Activated CD8-positive, alpha-beta T cell treated with anti-CD3 and anti-CD28 coated beads, Interleukin-2, amount 10 ng/mL, durations not matched to agents 7 days and 5 days (primary cell): ENCODE measurements at regions of chr20 and their contacts with region 1.

Region 1: DNA sequence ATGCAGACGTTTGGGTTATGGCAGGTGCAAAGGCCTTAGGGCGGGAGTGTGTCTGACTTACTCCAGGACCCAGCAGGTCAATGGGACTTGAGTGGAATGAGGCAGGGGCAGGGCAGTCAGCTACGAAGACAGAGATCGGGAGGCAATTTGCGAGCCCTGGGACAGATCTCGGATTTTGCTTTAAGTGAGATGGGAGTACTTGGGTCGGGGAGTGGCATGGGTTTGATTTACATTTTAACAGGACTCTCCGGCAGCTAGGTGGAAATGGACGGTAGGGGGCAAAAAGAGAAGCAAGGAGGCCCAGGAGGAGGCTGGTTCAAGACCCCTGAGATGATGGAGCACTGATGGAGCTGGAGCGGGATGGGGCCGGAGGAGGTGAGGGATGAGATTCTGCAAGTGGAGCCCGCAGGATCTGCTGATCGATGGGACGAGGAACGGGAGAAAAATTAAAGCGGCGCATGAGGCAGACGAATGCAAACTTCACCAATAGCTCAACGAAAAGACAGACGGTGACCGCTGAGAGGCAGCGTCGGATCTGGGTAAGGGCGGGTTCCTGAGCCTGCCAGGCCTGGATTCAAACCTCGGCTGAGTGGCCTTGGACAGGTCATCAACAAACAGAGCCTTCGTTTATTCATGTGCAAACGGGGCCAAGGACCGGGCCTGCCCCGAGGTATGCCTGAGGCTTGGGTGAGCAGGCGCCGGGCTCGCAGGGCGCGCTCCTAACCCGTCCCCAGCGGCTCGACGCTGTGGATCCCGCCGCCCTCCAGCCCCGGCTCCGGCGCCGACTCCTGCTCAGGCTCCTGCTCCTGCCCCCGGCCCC is 756 bp upstream of the RBCK1 start:
- DNase-seq: peak; percentile 77
- ATAC-seq: peak; percentile 86
- H3K4me3 Mint-ChIP-seq: peak overlapping the region; percentile 85
- H3K27ac Mint-ChIP-seq: peak overlapping the region; percentile 98
- H3K4me1 Mint-ChIP-seq: peaks cover 56% of the 10 kb centered on the region
- H3K27me3 Mint-ChIP-seq: no peaks in the 10 kb centered on the region

Region 2: DNA sequence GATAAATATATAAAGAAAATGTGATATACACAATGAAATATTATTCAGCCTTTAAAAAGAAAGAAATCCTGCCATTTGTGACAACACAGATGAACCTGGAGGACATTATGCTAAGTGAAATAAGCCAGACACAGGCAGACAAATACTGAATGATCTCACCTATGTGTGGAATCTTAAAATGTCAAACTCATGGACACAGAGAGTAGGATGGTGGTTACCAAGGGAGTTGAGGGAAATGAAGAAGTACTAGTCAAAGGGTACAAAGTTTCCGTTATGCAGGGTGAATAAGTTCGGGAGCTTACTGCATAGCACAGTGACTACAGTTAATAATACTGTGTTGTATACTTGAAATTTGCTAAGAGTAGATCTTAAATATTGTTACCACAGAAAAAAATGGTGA is 164.4 kb before region 1 on chr20:
- CTCF ChIA-PET with region 1: no interaction called
- POLR2A ChIA-PET with region 1: no interaction called
- DNase-seq: no peak
- ATAC-seq: no peak
- H3K4me3 Mint-ChIP-seq: no peak overlapping the region
- H3K27ac Mint-ChIP-seq: no peak overlapping the region
- H3K4me1 Mint-ChIP-seq: peaks cover 7% of the 10 kb centered on the region
- H3K27me3 Mint-ChIP-seq: peaks cover 15% of the 10 kb centered on the region

Region 3: DNA sequence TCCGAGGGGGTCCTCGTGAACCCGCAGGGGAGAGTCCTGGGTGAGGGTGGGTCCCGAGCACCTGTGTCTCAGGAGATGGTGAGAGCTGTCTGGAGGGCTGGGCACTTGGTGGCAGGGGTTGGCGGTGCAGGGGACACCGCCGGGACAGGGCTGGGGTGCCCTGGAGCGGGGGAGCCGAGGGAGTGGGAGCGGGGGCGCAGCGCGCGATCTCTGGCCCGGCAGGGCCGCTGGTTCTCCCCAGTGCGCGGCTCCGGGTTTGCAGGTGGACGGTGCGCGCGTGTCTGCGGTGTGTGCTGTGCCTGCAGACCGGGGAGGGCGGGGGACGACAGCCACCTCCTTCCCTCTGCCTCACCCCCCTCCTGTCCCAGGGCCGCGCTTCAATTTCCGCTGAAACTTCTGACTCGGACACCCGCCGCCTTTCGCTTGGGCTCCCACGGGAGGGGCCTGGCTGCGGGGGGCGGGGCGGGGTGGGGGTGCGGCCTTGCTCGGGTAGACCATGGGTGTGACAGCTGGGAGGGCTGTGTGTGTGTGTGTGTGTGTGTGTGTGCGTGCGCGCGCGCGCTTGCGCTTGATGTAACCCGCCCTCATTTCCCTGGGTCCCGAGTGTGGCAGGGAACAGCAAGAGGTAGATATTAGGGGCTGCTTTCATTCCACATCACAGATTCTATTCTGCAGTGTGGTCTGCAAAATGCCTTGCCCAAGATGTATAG is 25.6 kb before region 1 on chr20:
- CTCF ChIA-PET with region 1: interaction called, 15 read pairs
- POLR2A ChIA-PET with region 1: interaction called, 14 read pairs
- DNase-seq: peak; percentile 91
- ATAC-seq: peak; percentile 77
- H3K4me3 Mint-ChIP-seq: peak overlapping the region; percentile 79
- H3K27ac Mint-ChIP-seq: peak overlapping the region; percentile 87
- H3K4me1 Mint-ChIP-seq: peaks cover 29% of the 10 kb centered on the region
- H3K27me3 Mint-ChIP-seq: peaks cover 2% of the 10 kb centered on the region

Region 4: GRCh38 chr20:527571-527886 is 120.2 kb after region 1 on chr20:
- CTCF ChIA-PET with region 1: no interaction called
- POLR2A ChIA-PET with region 1: no interaction called
- DNase-seq: no peak
- ATAC-seq: no peak
- H3K4me3 Mint-ChIP-seq: no peak overlapping the region
- H3K27ac Mint-ChIP-seq: no peak overlapping the region
- H3K4me1 Mint-ChIP-seq: peaks cover 8% of the 10 kb centered on the region
- H3K27me3 Mint-ChIP-seq: no peaks in the 10 kb centered on the region